BJ (cell line): ENCODE measurements at regions of chr1 and their contacts with region 1.

Region 1: GRCh38 chr1:85612704-85613361 is 32.3 kb downstream of the CCN1 start:
- DNase-seq: peak; percentile 72
- H3K4me3 ChIP-seq: no peak overlapping the region
- H3K27me3 ChIP-seq: no peaks in the 10 kb centered on the region
- CTCF ChIP-seq: peak; percentile 77

Region 2: GRCh38 chr1:85264150-85264549 is 348.7 kb before region 1 on chr1:
- CTCF ChIA-PET with region 1: no interaction called
- POLR2A ChIA-PET with region 1: no interaction called
- DNase-seq: no peak
- H3K4me3 ChIP-seq: no peak overlapping the region
- H3K27me3 ChIP-seq: no peaks in the 10 kb centered on the region
- CTCF ChIP-seq: no peak

Region 3: GRCh38 chr1:85576642-85577418 is 36.0 kb before region 1 on chr1:
- CTCF ChIA-PET with region 1: interaction called, 5 read pairs
- POLR2A ChIA-PET with region 1: interaction called, 20 read pairs
- DNase-seq: no peak
- H3K4me3 ChIP-seq: peak overlapping the region; percentile 76
- H3K27me3 ChIP-seq: no peaks in the 10 kb centered on the region
- CTCF ChIP-seq: peak; percentile 36

Region 4: GRCh38 chr1:85628791-85629531 is 16.1 kb after region 1 on chr1:
- CTCF ChIA-PET with region 1: interaction called, 12 read pairs
- POLR2A ChIA-PET with region 1: interaction called, 12 read pairs
- DNase-seq: no peak
- H3K4me3 ChIP-seq: no peak overlapping the region
- H3K27me3 ChIP-seq: no peaks in the 10 kb centered on the region
- CTCF ChIP-seq: no peak

Region 5: DNA sequence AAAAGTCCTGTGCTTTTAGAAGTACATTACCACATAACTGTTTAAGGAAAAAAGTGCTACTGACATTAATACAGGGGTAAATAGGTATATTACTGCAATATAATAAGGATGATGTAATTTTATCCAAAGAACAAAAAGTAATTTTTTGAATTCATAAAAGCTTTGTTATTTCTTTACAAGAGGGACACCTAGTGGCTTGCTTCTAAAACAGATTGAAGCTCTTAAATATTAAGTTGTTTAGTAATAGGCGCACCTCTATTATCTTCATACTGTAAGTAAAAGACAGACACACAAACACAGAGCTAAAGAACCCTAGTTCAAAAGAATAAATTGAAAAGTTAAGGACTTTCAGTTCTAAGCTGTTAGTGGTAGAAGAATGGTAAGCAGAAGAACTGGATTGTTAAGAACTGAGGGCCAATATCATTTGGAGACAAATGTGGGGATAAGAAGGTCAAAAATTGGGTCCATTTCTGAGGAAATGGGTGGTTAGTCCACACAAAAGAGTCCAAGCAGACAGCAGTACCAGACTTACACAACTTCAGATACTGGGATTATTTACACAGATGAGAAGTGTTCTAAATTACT is 80.0 kb after region 1 on chr1:
- CTCF ChIA-PET with region 1: interaction called, 29 read pairs
- POLR2A ChIA-PET with region 1: no interaction called
- DNase-seq: peak; percentile 28
- H3K4me3 ChIP-seq: no peak overlapping the region
- H3K27me3 ChIP-seq: no peaks in the 10 kb centered on the region
- CTCF ChIP-seq: peak; percentile 43